AG04450 (cell line): ENCODE measurements at regions of chr17 and their contacts with region 1.

Region 1: DNA sequence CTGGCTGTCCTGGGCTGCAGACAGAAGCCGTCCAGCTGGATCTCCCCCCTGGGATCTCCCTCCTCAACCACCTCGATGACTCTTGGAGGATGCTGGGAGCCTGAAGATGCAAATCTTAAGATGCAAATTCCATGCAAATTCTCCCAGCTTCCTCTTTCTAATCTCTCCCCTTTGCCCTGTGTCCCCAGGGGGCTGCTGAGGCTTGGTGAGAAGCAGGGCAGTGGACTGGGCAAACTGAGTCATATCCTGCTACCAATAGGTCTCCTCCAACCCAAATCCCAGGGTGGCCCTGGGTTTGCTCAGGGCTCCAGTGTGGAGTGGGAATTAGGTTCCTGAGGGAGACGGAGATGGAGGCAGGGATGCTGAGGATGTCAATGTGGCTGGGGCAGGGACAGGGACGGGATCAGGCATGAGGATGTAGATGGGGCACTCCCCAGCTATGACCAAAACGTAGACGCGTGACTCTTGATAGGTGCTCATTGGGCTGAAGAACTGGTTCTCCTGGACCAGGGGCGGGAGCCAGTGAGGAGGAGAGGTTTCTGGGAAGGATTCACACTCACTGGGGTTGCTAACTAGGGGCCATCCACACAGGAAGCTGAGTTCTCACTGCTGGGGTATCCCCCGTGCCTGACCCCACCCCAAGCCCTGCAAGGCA is 3.6 kb upstream of the ALOX12B start:
- DNase-seq: no peak
- H3K4me3 ChIP-seq: no peak overlapping the region
- H3K27ac ChIP-seq: no peak overlapping the region
- H3K27me3 ChIP-seq: peaks cover 31% of the 10 kb centered on the region
- CTCF ChIP-seq: no peak

Region 2: GRCh38 chr17:8073627-8074484 is 17.3 kb before region 1 on chr17:
- CTCF ChIA-PET with region 1: interaction called, 31 read pairs
- POLR2A ChIA-PET with region 1: no interaction called
- DNase-seq: no peak
- H3K4me3 ChIP-seq: no peak overlapping the region
- H3K27ac ChIP-seq: peak overlapping the region; percentile 11
- H3K27me3 ChIP-seq: peaks cover 72% of the 10 kb centered on the region
- CTCF ChIP-seq: peak; percentile 83

Region 3: DNA sequence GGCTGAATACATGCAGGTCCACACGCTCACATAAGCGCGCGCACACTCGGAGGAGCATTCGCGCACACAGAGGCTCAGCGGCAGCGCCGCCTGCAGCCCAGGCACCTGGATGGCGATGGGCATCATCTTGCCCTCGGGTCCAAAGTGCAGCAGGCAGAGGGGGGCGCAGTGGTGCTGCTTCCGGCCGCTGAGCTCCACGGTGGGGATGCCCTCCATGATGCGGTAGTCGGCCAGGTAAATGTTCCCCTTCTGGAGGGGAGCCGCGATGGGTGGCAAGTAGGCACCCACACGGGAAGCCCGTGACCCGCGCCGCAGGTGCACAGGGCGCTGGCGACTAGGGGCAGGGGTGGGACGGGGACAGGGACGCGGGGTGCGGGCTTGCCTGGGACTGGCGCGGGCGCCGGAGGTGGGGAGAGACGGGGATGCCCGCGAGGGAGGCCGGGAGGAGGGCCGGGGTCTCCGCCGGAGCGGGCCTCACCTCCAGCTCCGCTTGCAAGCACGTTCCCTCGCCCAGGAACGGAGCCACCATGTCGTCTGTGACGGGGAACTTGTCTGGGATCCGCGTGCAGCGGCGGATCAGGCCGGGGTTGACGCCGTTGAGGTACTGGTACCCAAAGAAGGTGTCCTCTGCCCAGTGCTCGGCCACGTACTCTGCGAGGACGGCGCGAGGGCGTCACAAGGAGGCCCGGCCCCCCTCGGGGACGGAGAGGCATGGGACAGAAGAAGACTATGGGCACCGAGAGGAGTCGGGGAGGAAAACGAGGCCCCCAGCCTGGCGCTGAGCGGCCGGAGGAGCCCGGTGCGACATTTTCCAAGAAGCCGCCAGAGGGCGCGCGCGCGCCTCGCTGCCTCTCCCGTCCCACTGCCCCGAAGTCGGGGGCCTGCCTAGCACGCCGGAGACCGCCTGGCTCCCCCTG is 11.6 kb before region 1 on chr17:
- CTCF ChIA-PET with region 1: interaction called, 31 read pairs
- POLR2A ChIA-PET with region 1: no interaction called
- DNase-seq: no peak
- H3K4me3 ChIP-seq: peak overlapping the region; percentile 53
- H3K27ac ChIP-seq: no peak overlapping the region
- H3K27me3 ChIP-seq: peaks cover 68% of the 10 kb centered on the region
- CTCF ChIP-seq: peak; percentile 82

Region 4: GRCh38 chr17:8103549-8103948 is 12.4 kb after region 1 on chr17:
- CTCF ChIA-PET with region 1: interaction called, 24 read pairs
- POLR2A ChIA-PET with region 1: no interaction called
- DNase-seq: no peak
- H3K4me3 ChIP-seq: no peak overlapping the region
- H3K27ac ChIP-seq: no peak overlapping the region
- H3K27me3 ChIP-seq: peaks cover 12% of the 10 kb centered on the region
- CTCF ChIP-seq: no peak

Region 5: DNA sequence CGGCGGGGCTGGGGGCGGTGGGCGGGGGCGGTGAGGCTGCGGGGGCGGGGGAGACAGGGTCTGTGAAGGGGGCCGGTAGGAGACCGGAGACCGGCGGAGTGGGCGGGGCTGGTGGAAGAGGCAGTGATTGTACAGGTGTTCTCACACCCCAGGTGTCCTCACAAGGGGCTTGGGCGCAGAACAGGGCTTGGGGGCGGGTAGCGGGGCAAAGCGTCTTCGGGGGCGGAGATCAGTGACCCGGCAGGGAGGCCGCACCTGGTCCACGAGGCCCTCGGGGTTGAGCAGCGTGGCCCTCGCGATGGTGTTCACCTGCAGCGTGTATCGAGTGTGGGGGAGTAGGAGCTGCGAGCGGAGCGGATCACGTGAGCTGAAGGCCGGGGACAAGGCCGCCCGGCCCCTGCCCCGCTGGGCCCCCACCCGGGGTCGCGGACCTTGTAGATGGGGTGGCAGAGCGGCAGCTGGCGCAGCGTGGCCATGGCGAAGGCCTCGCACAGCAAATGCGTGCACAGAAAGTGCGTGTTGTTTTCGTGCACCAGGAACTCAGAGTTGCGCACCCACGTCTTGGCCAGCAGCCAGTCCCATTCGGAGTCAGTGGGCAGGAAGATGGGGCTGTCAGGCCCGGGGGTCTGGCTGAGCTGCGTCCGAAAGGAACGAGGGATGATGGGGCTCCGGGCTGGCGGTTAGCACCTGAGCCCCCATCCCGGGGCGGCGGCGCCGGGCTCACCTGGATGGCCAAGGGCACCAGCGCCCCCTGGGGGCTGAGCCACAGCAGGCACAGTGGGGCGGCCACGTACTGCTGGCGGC is 18.7 kb after region 1 on chr17:
- CTCF ChIA-PET with region 1: interaction called, 24 read pairs
- POLR2A ChIA-PET with region 1: no interaction called
- DNase-seq: no peak
- H3K4me3 ChIP-seq: peak overlapping the region; percentile 15; the same call in 1 of the 2 replicates
- H3K27ac ChIP-seq: no peak overlapping the region
- H3K27me3 ChIP-seq: peaks cover 45% of the 10 kb centered on the region
- CTCF ChIP-seq: peak; percentile 70